ENCODE measurements at regions of chr22 and their contacts with region 1.

Region 1: GRCh38 chr22:23119494-23120414 is 22.0 kb downstream of the RSPH14 start:
- DNase-seq: peak; percentile 55
- CTCF ChIP-seq: no peak

Region 2: DNA sequence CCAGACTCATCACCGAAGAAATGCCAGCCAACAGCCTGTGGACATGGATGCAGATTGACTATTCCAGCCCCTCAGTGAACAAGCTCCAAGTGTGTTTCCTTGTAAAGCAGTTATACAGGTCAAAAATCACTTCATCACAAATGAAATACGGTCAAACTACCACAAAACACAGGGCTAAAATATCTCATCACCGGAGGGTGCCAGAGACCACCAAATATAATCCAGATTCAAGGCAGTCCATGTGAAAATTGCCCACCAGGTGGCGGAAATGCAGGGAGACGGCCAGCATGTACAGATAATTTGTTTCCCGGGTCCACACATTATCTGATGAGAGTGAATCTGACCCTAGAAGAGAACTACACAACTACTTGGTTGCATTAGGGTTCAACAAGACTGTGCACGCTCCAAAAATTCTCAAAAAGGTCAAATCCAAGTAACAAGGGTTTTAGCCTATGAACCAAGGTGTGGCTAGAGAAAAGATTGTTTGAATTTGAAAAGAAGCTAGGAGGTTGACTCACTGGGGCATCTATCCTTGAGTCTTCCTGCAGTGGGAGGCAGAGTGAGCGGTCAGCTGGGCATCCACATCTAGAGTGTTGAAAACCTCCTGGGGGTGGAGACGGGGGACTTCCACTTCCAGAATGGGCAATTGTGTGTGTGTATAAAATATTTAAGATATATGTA is 160.5 kb before region 1 on chr22:
- in situ Hi-C with region 1: loop called (anchors 5 kb)
- DNase-seq: peak; percentile 51
- CTCF ChIP-seq: peak; percentile 85